MCF 10A (cell line): ENCODE measurements at regions of chrX and their contacts with region 1.

Region 1: DNA sequence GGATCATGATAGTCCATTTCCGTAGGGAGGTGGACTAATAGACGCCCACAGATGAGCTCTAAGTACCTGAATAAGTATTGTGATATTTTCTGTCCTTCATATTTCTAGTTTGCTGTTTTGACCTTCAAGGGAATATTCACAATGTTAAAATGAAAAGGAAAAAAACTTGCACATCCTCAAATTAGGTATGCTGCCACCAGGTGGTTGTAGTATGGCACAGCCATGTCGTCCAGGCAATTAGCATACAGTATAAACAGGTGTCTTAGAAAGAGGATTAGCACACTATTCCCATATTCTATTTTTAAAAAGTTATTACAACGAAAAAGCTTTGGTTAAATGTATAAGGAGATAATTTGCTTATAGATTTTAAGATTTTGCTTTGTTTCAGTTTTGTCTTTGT is 802.0 kb downstream of the RPA4 start:
- DNase-seq: peak; percentile 55
- H3K4me3 Mint-ChIP-seq: no peak overlapping the region
- H3K27ac Mint-ChIP-seq: no peak overlapping the region
- H3K4me1 Mint-ChIP-seq: no peaks in the 10 kb centered on the region
- H3K27me3 Mint-ChIP-seq: peaks cover 21% of the 10 kb centered on the region
- CTCF ChIP-seq: peak; percentile 42

Region 2: GRCh38 chrX:96770315-96770714 is 915.4 kb before region 1 on chrX:
- CTCF ChIA-PET with region 1: interaction called, 3 read pairs
- POLR2A ChIA-PET with region 1: no interaction called
- intact Hi-C with region 1: loop called (anchors 2 kb)
- DNase-seq: peak; percentile 29
- H3K4me3 Mint-ChIP-seq: no peak overlapping the region
- H3K27ac Mint-ChIP-seq: no peak overlapping the region
- H3K4me1 Mint-ChIP-seq: no peaks in the 10 kb centered on the region
- H3K27me3 Mint-ChIP-seq: peaks cover 58% of the 10 kb centered on the region
- CTCF ChIP-seq: peak; percentile 50

Region 3: GRCh38 chrX:97026406-97026805 is 659.3 kb before region 1 on chrX:
- CTCF ChIA-PET with region 1: no interaction called
- POLR2A ChIA-PET with region 1: no interaction called
- intact Hi-C with region 1: loop called (anchors 1 kb)
- DNase-seq: no peak
- H3K4me3 Mint-ChIP-seq: no peak overlapping the region
- H3K27ac Mint-ChIP-seq: no peak overlapping the region
- H3K4me1 Mint-ChIP-seq: no peaks in the 10 kb centered on the region
- H3K27me3 Mint-ChIP-seq: peaks cover 40% of the 10 kb centered on the region
- CTCF ChIP-seq: no peak